Mammary epithelial cell (primary cell): ENCODE measurements at regions of chr9 and their contacts with region 1.

Region 1: DNA sequence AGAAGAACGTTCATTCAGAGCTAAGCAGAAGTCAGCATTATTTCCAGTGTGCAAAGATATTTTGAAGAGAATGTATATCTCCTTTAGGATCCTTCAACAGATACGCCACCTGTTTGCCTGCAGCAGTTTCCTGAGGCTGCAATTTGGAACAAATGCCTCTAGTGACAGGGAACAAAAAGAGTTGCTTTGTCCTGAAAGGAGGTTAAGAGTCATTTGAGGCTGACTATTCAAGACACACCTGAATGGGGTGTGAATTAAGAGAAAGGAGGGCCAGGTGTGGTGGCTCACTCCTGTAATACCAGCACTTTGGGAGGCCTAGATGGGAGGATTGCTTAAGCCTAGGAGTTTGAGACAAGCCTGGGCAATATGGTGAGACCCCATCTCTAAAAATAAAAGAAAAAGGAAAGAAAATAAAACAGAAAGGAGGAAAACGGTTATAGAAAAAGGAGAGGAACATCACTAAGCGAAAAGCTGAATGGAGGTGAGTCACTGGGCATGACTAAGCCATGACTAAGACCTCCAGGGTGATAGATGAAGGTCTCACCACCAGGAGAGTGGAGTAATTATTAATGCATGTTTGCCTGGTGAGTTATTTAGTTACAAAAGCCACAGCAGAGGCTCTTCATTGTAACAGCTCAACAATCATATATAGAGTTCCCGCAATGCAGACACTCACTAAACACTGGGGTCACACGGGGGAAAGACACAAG is 255.2 kb upstream of the TNC start:
- DNase-seq: peak; percentile 97
- H3K4me3 ChIP-seq: peak overlapping the region in 1 of 3 experiments; percentile 8
- H3K27ac ChIP-seq: peak overlapping the region; percentile 90
- H3K4me1 ChIP-seq: peaks cover 36% of the 10 kb centered on the region
- H3K27me3 ChIP-seq: no peaks in the 10 kb centered on the region
- CTCF ChIP-seq: peak in 1 of 2 donors; percentile 29

Region 2: GRCh38 chr9:114911167-114911821 is 461.9 kb before region 1 on chr9:
- CTCF ChIA-PET with region 1: no interaction called
- dilution Hi-C with region 1: no loop called
- in situ Hi-C with region 1: no loop called
- intact Hi-C with region 1: no loop called
- DNase-seq: peak; percentile 48
- H3K4me3 ChIP-seq: no peak overlapping the region
- H3K27ac ChIP-seq: no peak overlapping the region
- H3K4me1 ChIP-seq: peaks cover 20% of the 10 kb centered on the region
- H3K27me3 ChIP-seq: no peaks in the 10 kb centered on the region
- CTCF ChIP-seq: peak; percentile 64 to 83

Region 3: DNA sequence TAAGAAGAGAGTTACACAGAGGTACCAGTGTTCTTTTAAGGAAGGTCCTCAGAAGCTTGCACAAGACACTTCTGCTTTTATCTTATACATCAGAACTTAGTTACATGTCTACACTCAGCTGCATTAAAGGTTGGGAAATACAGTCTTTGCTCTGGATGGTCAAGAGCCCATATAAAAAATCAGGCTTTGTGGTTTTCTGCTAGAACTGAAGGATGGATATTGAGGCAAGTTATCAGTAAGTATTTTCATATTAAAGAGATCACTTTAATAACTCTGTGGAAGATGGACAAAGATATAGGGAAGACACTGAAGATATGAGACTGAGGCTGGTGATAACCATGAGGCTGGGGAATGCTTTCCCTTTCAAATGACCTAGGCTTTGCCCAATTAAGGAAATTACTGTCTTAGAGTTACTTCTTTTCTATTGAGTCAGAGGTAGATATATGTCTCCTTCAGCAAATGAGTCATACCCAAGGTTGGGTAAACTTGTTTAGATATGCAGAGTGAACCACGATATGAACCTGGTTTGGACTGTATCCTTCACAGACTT is 168.2 kb before region 1 on chr9:
- CTCF ChIA-PET with region 1: no interaction called
- dilution Hi-C with region 1: no loop called
- in situ Hi-C with region 1: no loop called
- intact Hi-C with region 1: loop called (anchors 5 kb)
- DNase-seq: peak; percentile 92
- H3K4me3 ChIP-seq: no peak overlapping the region
- H3K27ac ChIP-seq: peak overlapping the region; percentile 63
- H3K4me1 ChIP-seq: peaks cover 65% of the 10 kb centered on the region
- H3K27me3 ChIP-seq: no peaks in the 10 kb centered on the region
- CTCF ChIP-seq: no peak